ENCODE measurements at regions of chr1 and their contacts with region 1.

Region 1: DNA sequence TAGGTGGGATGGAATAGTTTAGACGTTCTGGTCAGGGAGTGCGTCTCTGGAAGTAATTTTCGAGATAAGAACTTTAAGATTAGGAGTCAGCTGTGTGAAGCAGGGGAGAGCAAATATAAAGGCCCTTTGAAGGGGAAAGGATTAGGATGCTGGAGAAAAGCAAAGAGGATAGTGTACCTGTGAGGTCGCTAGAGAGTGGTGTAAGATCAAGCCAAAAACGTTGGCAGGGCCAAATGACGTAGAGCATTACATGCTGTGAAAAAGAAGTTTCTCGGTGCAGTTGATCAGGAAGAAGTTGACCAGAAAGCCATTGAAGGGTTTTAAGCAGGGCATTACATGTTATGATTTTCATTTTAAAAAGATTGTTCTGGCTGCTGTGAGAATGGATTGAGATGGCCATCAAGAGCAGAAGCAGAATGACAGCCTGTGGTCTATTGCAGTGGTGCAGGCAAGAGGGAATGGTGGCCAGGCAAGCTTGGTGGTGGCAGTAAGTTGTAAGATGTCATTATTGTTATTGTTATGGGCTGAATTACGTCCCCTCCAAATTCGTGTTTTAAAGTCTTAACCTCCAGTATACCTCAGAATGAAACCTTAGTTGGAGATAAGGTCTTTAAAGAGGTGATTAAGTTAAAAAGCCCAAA is 113.6 kb upstream of the KIF26B start:
- DNase-seq: no peak
- H3K4me3 ChIP-seq: no peak overlapping the region
- H3K27ac ChIP-seq: no peak overlapping the region
- H3K4me1 ChIP-seq: peaks cover 4 to 23% (median 10%) of the 10 kb centered on the region in 4 donors
- H3K27me3 ChIP-seq: no peaks in the 10 kb centered on the region
- CTCF ChIP-seq: no peak
- EP300 ChIP-seq: no peak
- POLR2A ChIP-seq: no peak

Region 2: GRCh38 chr1:244599937-244600350 is 441.2 kb before region 1 on chr1:
- intact Hi-C with region 1: loop called (anchors 5 kb)
- DNase-seq: no peak
- H3K4me3 ChIP-seq: no peak overlapping the region
- H3K27ac ChIP-seq: peak overlapping the region in 2 of 4 donors; percentile 23 to 48
- H3K4me1 ChIP-seq: no peaks in the 10 kb centered on the region
- H3K27me3 ChIP-seq: no peaks in the 10 kb centered on the region
- CTCF ChIP-seq: no peak
- EP300 ChIP-seq: no peak
- POLR2A ChIP-seq: no peak

Region 3: DNA sequence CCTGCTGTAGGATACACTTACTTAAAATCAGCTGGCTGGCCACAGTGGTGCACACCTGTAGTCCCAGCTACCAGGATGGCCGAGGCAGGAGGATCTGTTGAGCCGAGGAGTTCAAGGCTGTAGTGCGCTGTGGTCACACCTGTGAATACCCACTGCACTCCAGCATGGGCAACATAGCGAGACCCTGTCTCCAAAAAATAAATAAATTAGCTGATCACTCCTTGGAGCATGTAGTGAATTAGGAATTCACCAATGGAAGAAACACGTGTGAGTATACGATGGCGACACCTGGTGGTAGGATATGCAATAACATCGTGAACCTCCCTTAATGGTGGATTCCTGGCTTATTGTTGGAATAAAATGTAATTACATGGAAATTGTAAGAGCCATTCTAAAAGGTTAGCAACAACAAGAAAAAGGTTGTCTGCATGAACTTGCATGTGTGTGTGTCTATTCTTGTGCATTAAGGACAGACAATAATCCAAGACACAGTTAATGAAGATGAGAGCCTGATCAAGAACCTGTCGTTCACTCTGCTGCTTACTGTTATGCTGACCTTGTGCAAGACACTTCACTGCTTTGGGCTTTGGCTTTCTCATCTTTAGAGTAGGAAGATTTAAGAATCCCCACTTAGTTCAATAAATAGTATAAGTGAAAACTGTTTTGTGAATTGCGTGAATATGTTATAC is 244.3 kb before region 1 on chr1:
- intact Hi-C with region 1: loop called (anchors 2 kb)
- DNase-seq: no peak
- H3K4me3 ChIP-seq: no peak overlapping the region
- H3K27ac ChIP-seq: no peak overlapping the region
- H3K4me1 ChIP-seq: peaks cover 0 to 7% (median 2%) of the 10 kb centered on the region in 4 donors
- H3K27me3 ChIP-seq: no peaks in the 10 kb centered on the region
- CTCF ChIP-seq: peak; percentile 86 to 95 (median 87)
- EP300 ChIP-seq: no peak
- POLR2A ChIP-seq: no peak

Region 4: DNA sequence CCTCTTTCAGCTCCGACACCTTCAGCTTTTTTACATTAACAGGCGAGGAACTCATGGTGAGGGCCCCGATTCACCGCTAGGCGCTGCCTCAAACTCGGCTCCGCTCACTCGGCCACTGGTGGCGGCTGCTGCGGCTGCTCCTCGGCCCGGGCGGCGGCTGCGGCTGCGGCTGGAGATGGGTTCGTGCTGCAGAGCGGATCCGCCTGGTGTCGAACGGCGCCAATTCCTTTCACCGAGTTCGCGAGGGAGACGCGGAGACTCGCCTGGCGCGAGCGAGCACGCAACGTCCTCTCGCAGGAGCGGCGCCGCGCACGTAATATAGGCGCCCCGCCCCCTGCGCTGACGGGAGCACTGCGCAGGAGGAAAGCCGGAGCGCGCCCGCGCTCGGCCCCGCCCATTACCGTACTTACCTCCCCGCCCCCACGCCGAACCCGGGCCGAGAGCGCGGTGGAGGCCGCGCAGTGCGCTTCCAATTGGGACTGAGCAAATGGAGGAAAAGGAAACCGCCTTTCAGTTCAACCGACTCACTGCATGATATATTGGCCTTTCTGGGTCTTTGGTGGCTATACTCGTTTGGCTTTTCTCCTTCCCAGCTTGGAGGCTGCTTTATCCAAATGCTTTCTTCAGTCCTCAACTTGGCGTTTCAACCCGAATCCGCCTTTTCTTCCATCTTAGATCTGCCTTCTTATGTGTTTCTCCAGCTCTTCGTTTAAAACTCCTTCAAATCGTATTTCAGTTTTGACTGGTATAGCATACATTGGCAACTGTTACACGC is 176.7 kb before region 1 on chr1 and contains the start of gene HNRNPU:
- intact Hi-C with region 1: loop called (anchors 5 kb)
- DNase-seq: peak; percentile 98
- H3K4me3 ChIP-seq: peak within 1 kb of the TSS; percentile 97 to 100 (median 99)
- H3K27ac ChIP-seq: peak within 1 kb of the TSS; percentile 100
- H3K4me1 ChIP-seq: peaks cover 30 to 48% (median 44%) of the 10 kb centered on the region in 4 donors
- H3K27me3 ChIP-seq: no peaks in the 10 kb centered on the region
- CTCF ChIP-seq: peak in 2 of 3 experiments; percentile 27 to 36
- EP300 ChIP-seq: peak; percentile 90
- POLR2A ChIP-seq: peak; percentile 97
- total RNA-seq, gene HNRNPU: 255 to 306 (median 279) TPM

Region 5: GRCh38 chr1:244964112-244964971 is 76.8 kb before region 1 on chr1:
- intact Hi-C with region 1: loop called (anchors 5 kb)
- DNase-seq: no peak
- H3K4me3 ChIP-seq: peak overlapping the region in 3 of 4 donors; percentile 4 to 25 (median 19)
- H3K27ac ChIP-seq: peak overlapping the region; percentile 71 to 76 (median 74)
- H3K4me1 ChIP-seq: peaks cover 24 to 49% (median 41%) of the 10 kb centered on the region in 4 donors
- H3K27me3 ChIP-seq: no peaks in the 10 kb centered on the region
- CTCF ChIP-seq: no peak
- EP300 ChIP-seq: no peak
- POLR2A ChIP-seq: no peak

Region 6: GRCh38 chr1:245310571-245311531 is 269.7 kb after region 1 on chr1:
- intact Hi-C with region 1: no loop called
- DNase-seq: no peak
- H3K4me3 ChIP-seq: no peak overlapping the region
- H3K27ac ChIP-seq: no peak overlapping the region
- H3K4me1 ChIP-seq: peaks cover 8 to 14% (median 13%) of the 10 kb centered on the region in 4 donors
- H3K27me3 ChIP-seq: no peaks in the 10 kb centered on the region
- CTCF ChIP-seq: no peak
- EP300 ChIP-seq: no peak
- POLR2A ChIP-seq: no peak